Activated CD8-positive, alpha-beta T cell treated with anti-CD3 and anti-CD28 coated beads, Interleukin-2, amount 10 ng/mL, durations not matched to agents 7 days and 5 days (primary cell): ENCODE measurements at regions of chr12 and their contacts with region 1.

Region 1: DNA sequence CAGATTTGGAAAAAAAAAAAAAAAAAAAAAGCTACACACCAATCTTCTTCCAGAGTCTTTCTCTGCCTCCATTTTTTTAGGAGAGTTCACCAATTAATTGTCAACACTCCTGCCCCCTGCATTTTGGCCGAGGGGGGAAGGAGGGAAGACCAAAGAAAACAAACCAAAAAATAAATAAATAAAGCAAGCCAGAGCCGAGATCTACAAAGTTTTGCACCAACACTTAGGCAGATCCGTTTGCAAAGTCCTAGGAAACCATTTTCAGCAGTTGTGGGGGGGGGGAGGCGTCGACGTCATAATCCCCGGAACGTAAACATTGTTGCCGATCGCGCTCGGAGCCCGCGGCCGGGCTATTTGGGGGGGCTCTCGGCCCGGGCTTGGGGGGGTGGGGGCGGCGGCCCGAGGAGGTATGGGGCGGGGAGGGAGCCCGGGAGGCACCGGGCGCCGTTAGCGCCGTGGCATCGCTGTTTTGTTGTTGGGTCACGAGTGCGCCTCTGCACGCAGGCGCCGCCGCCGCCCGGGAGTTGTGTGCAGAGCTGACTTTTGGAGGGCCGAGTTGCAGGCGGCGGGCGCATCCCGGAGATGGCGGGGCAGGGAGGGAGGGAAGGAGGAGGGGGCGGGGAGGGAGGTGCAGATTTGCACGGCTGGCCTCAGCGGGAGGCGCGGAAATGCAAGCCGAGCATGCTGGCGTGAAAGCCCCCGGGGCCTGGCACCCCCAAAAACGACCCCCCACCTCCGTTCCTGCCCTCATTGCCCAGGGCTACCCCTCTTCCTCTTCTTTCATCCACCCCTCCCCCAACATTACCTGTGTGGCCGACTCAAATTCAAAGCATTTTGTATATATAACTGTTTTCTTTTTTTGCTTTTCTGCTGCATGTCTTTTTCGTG is 598 bp downstream of the KDM2B start:
- DNase-seq: peak; percentile 84
- ATAC-seq: peak; percentile 76
- H3K4me3 Mint-ChIP-seq: peak overlapping the region; percentile 98
- H3K27ac Mint-ChIP-seq: peak overlapping the region; percentile 98
- H3K4me1 Mint-ChIP-seq: peaks cover 36% of the 10 kb centered on the region
- H3K27me3 Mint-ChIP-seq: no peaks in the 10 kb centered on the region

Region 2: GRCh38 chr12:121536899-121537813 is 43.1 kb before region 1 on chr12:
- CTCF ChIA-PET with region 1: no interaction called
- POLR2A ChIA-PET with region 1: interaction called, 13 read pairs
- DNase-seq: peak; percentile 66
- ATAC-seq: peak; percentile 63
- H3K4me3 Mint-ChIP-seq: peak overlapping the region; percentile 74
- H3K27ac Mint-ChIP-seq: peak overlapping the region; percentile 85
- H3K4me1 Mint-ChIP-seq: peaks cover 55% of the 10 kb centered on the region
- H3K27me3 Mint-ChIP-seq: no peaks in the 10 kb centered on the region

Region 3: GRCh38 chr12:121590476-121591143 is 10.4 kb after region 1 on chr12:
- CTCF ChIA-PET with region 1: interaction called, 5 read pairs
- POLR2A ChIA-PET with region 1: interaction called, 35 read pairs
- DNase-seq: peak; percentile 77
- ATAC-seq: peak; percentile 82
- H3K4me3 Mint-ChIP-seq: peak overlapping the region; percentile 75
- H3K27ac Mint-ChIP-seq: peak overlapping the region; percentile 98
- H3K4me1 Mint-ChIP-seq: peaks cover 40% of the 10 kb centered on the region
- H3K27me3 Mint-ChIP-seq: no peaks in the 10 kb centered on the region